Heart right ventricle (tissue), 16 donors: ENCODE measurements at regions of chr16 and their contacts with region 1.

Region 1: DNA sequence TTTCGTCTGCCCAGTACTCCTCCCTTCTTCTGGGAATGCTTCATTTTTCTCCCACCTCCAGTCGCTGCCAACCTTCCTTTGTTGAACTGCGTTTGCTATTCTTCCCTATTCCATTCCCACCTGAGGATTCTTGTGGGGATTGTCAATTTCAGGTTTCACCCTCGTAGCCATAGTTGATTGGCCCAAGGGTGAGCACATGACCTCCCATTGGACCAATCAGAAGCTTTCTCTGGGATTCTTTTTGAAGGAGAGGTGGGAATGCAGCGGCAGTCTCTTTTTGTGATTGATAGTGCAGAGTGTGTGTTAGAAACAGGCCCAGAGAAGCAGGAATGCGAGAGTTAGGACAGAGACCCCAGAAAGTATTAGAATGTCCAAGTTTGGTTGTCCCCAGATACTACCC is 49.1 kb upstream of the GPRC5B start:
- DNase-seq: no peak
- ATAC-seq: no peak
- H3K4me3 ChIP-seq: no peak overlapping the region
- H3K27ac ChIP-seq: no peak overlapping the region
- H3K4me1 ChIP-seq: no peaks in the 10 kb centered on the region
- H3K27me3 ChIP-seq: peaks cover 0 to 40% (median 14%) of the 10 kb centered on the region in 7 donors
- CTCF ChIP-seq: no peak

Region 2: GRCh38 chr16:19959736-19960135 is 26.0 kb after region 1 on chr16:
- intact Hi-C with region 1: loop called in 2 of 10 experiments (anchors 1 kb)
- DNase-seq: no peak
- ATAC-seq: no peak
- H3K4me3 ChIP-seq: no peak overlapping the region
- H3K27ac ChIP-seq: no peak overlapping the region
- H3K4me1 ChIP-seq: no peaks in the 10 kb centered on the region
- H3K27me3 ChIP-seq: peaks cover 0 to 38% (median 6%) of the 10 kb centered on the region in 7 donors
- CTCF ChIP-seq: no peak